Motor neuron (in vitro differentiated cells): ENCODE measurements at regions of chr6 and their contacts with region 1.

Region 1: GRCh38 chr6:113879186-113880096 is 22.3 kb downstream of the MARCKS start:
- ATAC-seq: peak; percentile 80 to 100 (median 99)
- H3K4me3 ChIP-seq: no peak overlapping the region
- H3K27ac ChIP-seq: no peak overlapping the region
- H3K4me1 ChIP-seq: peaks cover 0 to 4% of the 10 kb centered on the region in 2 donors

Region 2: GRCh38 chr6:112780498-112781096 is 1098.8 kb before region 1 on chr6:
- in situ Hi-C with region 1: loop called in 6 of 9 experiments (anchors 25 kb)
- ATAC-seq: peak; percentile 82 to 96 (median 92)
- H3K4me3 ChIP-seq: no peak overlapping the region
- H3K27ac ChIP-seq: no peak overlapping the region
- H3K4me1 ChIP-seq: peaks cover 9 to 10% of the 10 kb centered on the region in 2 donors

Region 3: DNA sequence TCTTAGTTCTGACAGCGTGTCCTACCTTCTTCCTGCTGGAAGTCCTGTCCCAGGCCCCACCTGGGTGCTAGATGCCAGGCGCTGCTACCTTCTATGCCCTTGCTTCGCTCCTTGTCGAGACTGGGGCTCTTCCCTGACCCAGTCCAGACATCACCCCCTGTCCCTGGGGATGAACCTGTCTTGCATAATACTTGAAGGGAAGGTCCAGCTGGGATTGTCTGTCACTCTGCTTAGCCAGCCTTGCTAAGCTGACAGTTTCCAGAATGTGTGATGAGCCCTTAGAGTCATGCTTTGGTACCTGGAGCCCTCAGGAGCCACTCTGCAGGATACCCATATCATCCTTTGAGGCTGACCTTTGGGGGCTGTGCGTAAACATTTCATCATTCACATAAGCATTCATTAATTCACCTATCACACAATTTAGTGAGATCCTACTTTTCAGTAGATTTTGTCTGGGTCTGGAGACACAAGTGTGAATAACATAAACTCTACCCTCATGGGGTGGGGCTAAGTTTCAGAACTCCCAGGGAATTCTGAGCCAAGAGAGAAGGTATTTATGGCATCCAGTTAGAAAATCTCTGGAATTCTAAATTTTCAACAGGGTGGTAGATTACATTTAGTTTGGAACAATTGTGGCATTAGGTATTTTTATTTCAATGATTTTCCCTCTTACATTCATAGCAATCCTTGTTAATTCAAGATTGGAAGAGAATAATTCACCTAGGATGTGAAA is 242.6 kb after region 1 on chr6:
- in situ Hi-C with region 1: no loop called
- ATAC-seq: no peak
- H3K4me3 ChIP-seq: no peak overlapping the region
- H3K27ac ChIP-seq: no peak overlapping the region
- H3K4me1 ChIP-seq: peaks cover 0 to 22% of the 10 kb centered on the region in 2 donors